B cell (primary cell): ENCODE measurements at regions of chr16 and their contacts with region 1.

Region 1: DNA sequence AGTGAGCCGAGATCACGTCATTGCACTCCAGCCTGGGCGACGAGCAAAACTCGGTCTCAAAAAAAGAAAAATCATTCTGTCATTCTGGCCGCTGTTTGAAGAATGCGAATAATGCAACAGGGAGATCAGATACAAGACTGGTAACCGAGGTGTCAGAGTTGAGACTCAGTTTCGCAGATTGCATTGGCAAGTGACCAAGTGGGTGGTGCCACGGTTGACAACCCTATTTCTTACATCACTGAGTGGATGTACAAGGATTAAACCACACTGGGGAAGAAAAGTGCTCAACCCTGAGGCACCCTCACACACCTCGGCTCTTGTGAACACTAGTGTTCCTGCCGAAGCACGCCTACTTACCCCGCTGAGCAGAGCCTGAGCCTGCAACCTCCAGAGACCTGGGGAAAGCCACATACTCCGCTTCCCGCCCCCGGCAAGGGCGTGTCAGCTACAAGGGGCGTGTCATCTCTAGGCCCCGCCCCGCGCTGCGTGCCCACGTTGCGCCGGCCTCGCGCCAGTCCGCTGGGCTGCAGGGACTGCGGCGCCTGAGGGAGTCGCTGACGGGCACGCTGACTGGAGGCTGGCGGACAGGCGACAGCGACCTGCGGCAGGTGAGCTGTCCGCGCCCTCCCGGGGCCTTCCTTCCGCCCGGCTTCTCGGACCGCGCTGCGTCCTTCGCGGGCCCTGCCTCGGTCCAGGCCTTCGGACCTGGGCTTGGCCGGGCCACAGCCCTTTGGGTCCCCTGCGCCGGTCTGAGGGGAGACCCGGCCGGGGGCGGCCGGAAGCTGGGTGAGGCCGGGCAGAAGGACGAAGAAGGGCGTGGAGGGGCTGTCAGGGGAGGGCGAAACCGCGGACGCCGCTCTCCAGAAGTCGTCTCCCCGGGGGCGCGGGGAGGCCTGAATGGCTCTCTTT is at the start of gene HMOX2:
- DNase-seq: peak; percentile 96
- ATAC-seq: peak; percentile 93
- H3K4me3 ChIP-seq: peak within 1 kb of the TSS; percentile 57 to 96 (median 86)
- H3K4me3 Mint-ChIP-seq: peak within 1 kb of the TSS; percentile 84
- H3K27ac ChIP-seq: peak within 1 kb of the TSS; percentile 28 to 78
- H3K27ac Mint-ChIP-seq: peak within 1 kb of the TSS; percentile 92
- H3K4me1 ChIP-seq: peaks cover 19 to 37% of the 10 kb centered on the region in 2 donors
- H3K4me1 Mint-ChIP-seq: peaks cover 34% of the 10 kb centered on the region
- H3K27me3 ChIP-seq: no peaks in the 10 kb centered on the region
- H3K27me3 Mint-ChIP-seq: no peaks in the 10 kb centered on the region
- CTCF ChIP-seq: peak; percentile 56
- total RNA-seq, gene HMOX2: 36.5 TPM in 2 replicates

Region 2: GRCh38 chr16:4350787-4351659 is 125.1 kb before region 1 on chr16 and contains the start of gene PAM16:
- CTCF ChIA-PET with region 1: no interaction called
- POLR2A ChIA-PET with region 1: interaction called, 3 read pairs
- intact Hi-C with region 1: loop called (anchors 1 kb)
- DNase-seq: peak; percentile 97
- ATAC-seq: peak; percentile 92
- H3K4me3 ChIP-seq: peak within 1 kb of the TSS; percentile 56 to 84 (median 81)
- H3K4me3 Mint-ChIP-seq: peak within 1 kb of the TSS; percentile 96
- H3K27ac ChIP-seq: peak within 1 kb of the TSS; percentile 57 to 78
- H3K27ac Mint-ChIP-seq: peak within 1 kb of the TSS; percentile 95
- H3K4me1 ChIP-seq: peaks cover 9 to 17% of the 10 kb centered on the region in 2 donors
- H3K4me1 Mint-ChIP-seq: peaks cover 22% of the 10 kb centered on the region
- H3K27me3 ChIP-seq: no peaks in the 10 kb centered on the region
- H3K27me3 Mint-ChIP-seq: no peaks in the 10 kb centered on the region
- CTCF ChIP-seq: peak; percentile 33
- total RNA-seq, gene PAM16: 56.6 and 57.3 TPM in 2 replicates

Region 3: DNA sequence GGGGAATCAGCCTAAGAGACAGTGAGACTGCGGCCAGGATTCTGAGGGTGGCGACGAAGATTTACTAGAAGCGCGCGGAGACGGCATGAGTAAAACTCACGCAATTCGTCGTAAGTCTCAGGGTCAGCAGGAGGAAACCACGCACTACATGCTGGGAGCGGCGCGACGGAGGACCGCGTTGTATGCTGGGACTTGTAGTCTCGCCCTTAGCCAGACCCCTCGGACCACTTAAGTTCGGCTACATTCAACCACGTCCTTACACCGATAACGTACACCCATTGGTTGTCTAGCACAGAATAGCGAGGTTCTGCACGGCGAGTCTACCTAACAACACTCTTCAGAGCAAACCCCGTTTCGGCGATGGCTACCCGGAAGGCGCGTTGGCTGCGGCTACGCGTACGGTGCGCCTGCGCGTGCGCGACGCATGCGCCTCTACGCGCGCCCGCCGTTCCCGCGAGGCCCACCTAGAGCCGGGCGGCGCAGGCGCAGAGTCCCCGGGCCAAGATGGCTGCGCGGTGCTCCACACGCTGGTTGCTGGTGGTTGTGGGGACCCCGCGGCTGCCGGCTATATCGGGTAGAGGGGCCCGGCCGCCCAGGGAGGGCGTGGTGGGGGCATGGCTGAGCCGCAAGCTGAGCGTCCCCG is 50.6 kb before region 1 on chr16 and contains the start of gene DNAJA3:
- CTCF ChIA-PET with region 1: no interaction called
- POLR2A ChIA-PET with region 1: interaction called, 5 read pairs
- intact Hi-C with region 1: loop called (anchors 1 kb)
- DNase-seq: peak; percentile 98
- ATAC-seq: peak; percentile 92
- H3K4me3 ChIP-seq: peak within 1 kb of the TSS; percentile 80 to 99 (median 89)
- H3K4me3 Mint-ChIP-seq: peak within 1 kb of the TSS; percentile 97
- H3K27ac ChIP-seq: peak within 1 kb of the TSS; percentile 93 to 96
- H3K27ac Mint-ChIP-seq: peak within 1 kb of the TSS; percentile 100
- H3K4me1 ChIP-seq: peaks cover 14 to 20% of the 10 kb centered on the region in 2 donors
- H3K4me1 Mint-ChIP-seq: peaks cover 25% of the 10 kb centered on the region
- H3K27me3 ChIP-seq: no peaks in the 10 kb centered on the region
- H3K27me3 Mint-ChIP-seq: no peaks in the 10 kb centered on the region
- CTCF ChIP-seq: no peak
- total RNA-seq, gene DNAJA3: 59.3 and 68.1 TPM in 2 replicates

Region 4: DNA sequence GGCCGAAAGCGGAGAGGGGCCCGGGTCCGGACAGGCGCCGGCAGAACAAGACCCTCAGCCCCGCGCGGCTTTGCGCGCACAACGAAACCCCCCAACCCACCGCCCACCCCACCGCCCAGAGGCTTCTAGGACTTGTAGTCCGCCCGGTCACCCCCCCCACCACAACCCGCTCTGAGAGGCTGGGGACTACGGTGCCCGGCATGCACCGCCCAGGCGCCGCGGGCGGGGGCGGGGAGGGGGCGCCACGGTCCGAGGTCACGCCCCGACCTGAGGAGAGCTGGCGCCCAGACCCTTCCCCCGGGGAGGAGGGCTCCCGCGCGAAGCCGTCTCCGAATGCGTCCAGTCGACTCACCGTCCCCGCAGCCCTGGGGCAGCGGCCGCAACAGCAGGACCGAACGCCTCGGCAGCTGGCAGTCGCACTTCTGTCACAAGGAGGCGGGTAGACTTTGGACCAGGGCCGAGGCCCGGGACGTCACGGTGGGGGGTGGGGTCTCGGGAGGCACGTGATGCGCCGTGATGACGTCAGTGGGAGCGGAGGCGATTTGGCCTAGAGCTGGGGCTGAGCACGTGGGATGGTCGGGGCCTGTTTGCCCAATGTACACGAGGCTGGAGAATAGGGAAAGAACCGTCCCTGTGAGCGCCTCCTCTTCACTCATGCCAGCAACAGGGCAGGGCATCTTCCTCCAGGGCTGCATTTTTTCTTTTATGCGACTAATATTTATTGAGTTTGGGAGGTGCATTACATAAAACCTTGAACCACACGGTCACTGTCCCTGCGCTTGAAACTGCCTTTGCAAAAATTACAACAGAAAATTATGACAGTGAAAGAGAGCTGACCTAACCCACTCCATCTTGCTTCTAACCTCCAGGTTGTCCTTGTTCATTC is 62.5 kb after region 1 on chr16 and contains the start of gene CDIP1:
- CTCF ChIA-PET with region 1: interaction called, 3 read pairs
- POLR2A ChIA-PET with region 1: no interaction called
- intact Hi-C with region 1: loop called (anchors 1 kb)
- DNase-seq: peak; percentile 99
- ATAC-seq: peak; percentile 91
- H3K4me3 ChIP-seq: peak within 1 kb of the TSS; percentile 7 to 93 (median 73)
- H3K4me3 Mint-ChIP-seq: peak within 1 kb of the TSS; percentile 92
- H3K27ac ChIP-seq: peak within 1 kb of the TSS; percentile 87 to 95
- H3K27ac Mint-ChIP-seq: peak within 1 kb of the TSS; percentile 96
- H3K4me1 ChIP-seq: peaks cover 7 to 13% of the 10 kb centered on the region in 2 donors
- H3K4me1 Mint-ChIP-seq: peaks cover 14% of the 10 kb centered on the region
- H3K27me3 ChIP-seq: no peaks in the 10 kb centered on the region
- H3K27me3 Mint-ChIP-seq: no peaks in the 10 kb centered on the region
- CTCF ChIP-seq: peak; percentile 24
- total RNA-seq, gene CDIP1: 18.0 and 20.3 TPM in 2 replicates

Region 5: DNA sequence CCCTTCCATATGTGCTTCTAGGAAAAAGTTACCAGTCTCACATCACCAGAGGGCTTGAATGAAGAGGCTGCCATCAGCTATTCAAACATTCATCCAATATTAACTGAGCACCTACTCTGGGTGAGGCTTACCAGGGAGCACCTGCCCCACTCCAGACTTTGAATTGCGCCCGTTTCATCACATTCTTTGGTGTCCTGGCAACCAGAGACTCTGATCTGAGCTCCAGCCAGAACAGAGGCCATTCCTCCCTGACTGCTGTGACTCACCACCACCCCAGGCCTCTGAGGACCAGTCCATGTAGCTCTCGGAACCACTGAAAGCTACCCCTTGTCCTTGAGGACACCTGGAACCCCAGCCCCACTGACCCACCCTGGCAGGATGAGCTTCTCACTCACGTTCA is 80.0 kb after region 1 on chr16 and contains the start of gene C16orf96:
- CTCF ChIA-PET with region 1: no interaction called
- POLR2A ChIA-PET with region 1: interaction called, 17 read pairs
- intact Hi-C with region 1: no loop called
- DNase-seq: no peak
- ATAC-seq: no peak
- H3K4me3 ChIP-seq: no peak within 1 kb of the TSS
- H3K4me3 Mint-ChIP-seq: no peak within 1 kb of the TSS
- H3K27ac ChIP-seq: no peak within 1 kb of the TSS
- H3K27ac Mint-ChIP-seq: no peak within 1 kb of the TSS
- H3K4me1 ChIP-seq: no peaks in the 10 kb centered on the region
- H3K4me1 Mint-ChIP-seq: no peaks in the 10 kb centered on the region
- H3K27me3 ChIP-seq: no peaks in the 10 kb centered on the region
- H3K27me3 Mint-ChIP-seq: peaks cover 10% of the 10 kb centered on the region
- CTCF ChIP-seq: no peak
- total RNA-seq, gene C16orf96: 0.66 and 0.79 TPM in 2 replicates